Endothelial cell of umbilical vein (primary cell): ENCODE measurements at regions of chr3 and their contacts with region 1.

Region 1: DNA sequence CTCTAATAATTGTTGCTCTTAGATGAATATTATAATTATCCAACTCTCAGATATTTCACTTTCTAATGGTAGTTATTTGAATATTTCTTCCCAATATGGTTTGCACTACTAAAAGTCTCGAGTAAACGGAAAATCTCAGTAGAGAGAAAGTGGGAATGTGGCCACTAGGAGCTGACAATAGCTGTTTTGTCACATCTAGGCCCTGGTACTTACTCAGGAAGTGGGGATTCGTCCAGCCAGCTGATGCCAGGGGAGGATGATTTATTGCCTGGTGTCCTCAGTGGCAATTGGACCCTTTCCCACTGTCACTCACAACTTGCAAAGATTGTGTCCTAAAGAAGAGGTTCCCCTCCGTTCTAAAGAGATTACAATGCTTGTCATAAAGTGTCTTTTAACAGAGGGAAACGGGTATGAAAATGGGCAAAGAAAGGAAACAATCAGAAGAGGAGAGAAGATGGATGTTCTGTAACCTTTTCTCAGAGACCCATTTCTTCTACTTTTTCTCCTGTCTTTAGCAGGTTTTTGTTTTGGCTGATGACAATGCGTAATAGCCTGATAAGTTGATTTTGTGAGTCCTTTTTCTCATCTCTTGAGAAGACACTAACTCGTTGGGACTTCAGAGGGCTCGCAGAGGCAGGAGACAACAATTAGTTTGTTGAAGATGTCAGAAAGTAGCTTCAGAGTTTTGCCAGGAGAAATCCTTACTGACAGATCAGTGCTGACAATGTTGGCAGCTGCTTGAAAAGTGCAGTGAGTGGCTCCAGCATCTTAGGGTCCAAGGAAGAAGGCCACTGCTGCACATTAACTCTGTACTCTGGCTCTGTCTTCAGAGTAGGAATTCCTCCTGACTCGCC is 320.6 kb downstream of the MECOM start:
- DNase-seq: no peak
- H3K4me3 ChIP-seq: no peak overlapping the region
- H3K27ac ChIP-seq: no peak overlapping the region
- H3K4me1 ChIP-seq: peaks cover 5% of the 10 kb centered on the region
- H3K27me3 ChIP-seq: no peaks in the 10 kb centered on the region
- CTCF ChIP-seq: no peak
- POLR2A ChIP-seq: no peak

Region 2: GRCh38 chr3:169354774-169355501 is 12.1 kb after region 1 on chr3:
- CTCF ChIA-PET with region 1: interaction called, 16 read pairs
- POLR2A ChIA-PET with region 1: no interaction called
- dilution Hi-C with region 1: no loop called
- intact Hi-C with region 1: no loop called
- DNase-seq: peak; percentile 70
- H3K4me3 ChIP-seq: peak overlapping the region in 1 of 3 experiments; percentile 20
- H3K27ac ChIP-seq: peak overlapping the region; percentile 12
- H3K4me1 ChIP-seq: peaks cover 19% of the 10 kb centered on the region
- H3K27me3 ChIP-seq: no peaks in the 10 kb centered on the region
- CTCF ChIP-seq: no peak
- POLR2A ChIP-seq: no peak